ENCODE measurements at regions of chr5 and their contacts with region 1.

Region 1: DNA sequence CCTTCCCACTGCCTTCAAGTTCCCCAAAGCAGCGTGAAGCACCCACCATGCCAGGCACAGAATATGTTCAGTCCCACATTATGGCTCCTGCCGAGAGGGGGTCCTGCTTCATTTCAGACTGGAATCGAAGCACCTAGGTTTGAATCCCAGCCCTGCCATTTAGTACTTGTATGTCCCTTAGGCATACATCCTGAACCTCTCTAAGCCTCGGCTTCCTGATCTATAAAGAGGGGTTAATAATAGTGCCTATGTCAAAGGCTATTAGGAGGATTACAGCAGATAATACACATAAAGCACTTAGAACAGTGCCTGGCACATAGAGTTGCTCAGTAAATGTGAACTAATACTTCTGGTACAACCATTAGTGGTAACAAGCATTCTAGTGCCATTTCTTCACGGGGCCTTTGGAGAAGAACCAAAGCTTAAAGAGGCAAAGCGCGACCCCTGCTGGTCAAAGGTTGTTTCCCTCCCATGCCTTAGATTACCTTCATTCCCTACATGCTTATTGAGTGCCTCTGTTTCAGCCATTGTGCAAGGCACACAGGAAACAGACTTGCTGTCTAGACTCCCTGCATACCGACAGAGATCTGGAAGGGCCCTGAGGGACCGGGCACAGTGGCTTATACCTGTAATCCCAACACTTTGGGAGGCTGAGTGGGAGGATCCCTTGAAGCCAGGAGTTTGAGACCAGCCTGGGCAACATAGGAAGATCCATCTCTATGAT is 98.2 kb downstream of the PPARGC1B start:
- DNase-seq: peak; percentile 77
- ATAC-seq: peak; percentile 92
- H3K4me3 ChIP-seq: no peak overlapping the region
- H3K27ac ChIP-seq: no peak overlapping the region
- H3K4me1 ChIP-seq: peaks cover 0 to 2% of the 10 kb centered on the region in 2 experiments; a peak in 1 of 4 replicates
- H3K27me3 ChIP-seq: no peaks in the 10 kb centered on the region
- CTCF ChIP-seq: peak; percentile 79 to 95 (median 91)
- POLR2A ChIP-seq: no peak
- RAD21 ChIP-seq: peak; percentile 97

Region 2: GRCh38 chr5:149636851-149637246 is 191.5 kb before region 1 on chr5:
- CTCF ChIA-PET with region 1: interaction called, 54 read pairs
- POLR2A ChIA-PET with region 1: no interaction called
- RAD21 ChIA-PET with region 1: interaction called in 1 of 2 experiments, 7 read pairs
- intact Hi-C with region 1: loop called (anchors 1 kb)
- DNase-seq: peak; percentile 65
- ATAC-seq: peak; percentile 88
- H3K4me3 ChIP-seq: no peak overlapping the region
- H3K27ac ChIP-seq: no peak overlapping the region
- H3K4me1 ChIP-seq: peaks cover 16 to 35% of the 10 kb centered on the region in 2 experiments
- H3K27me3 ChIP-seq: no peaks in the 10 kb centered on the region
- CTCF ChIP-seq: peak; percentile 84 to 97 (median 94)
- POLR2A ChIP-seq: no peak
- RAD21 ChIP-seq: peak; percentile 100

Region 3: DNA sequence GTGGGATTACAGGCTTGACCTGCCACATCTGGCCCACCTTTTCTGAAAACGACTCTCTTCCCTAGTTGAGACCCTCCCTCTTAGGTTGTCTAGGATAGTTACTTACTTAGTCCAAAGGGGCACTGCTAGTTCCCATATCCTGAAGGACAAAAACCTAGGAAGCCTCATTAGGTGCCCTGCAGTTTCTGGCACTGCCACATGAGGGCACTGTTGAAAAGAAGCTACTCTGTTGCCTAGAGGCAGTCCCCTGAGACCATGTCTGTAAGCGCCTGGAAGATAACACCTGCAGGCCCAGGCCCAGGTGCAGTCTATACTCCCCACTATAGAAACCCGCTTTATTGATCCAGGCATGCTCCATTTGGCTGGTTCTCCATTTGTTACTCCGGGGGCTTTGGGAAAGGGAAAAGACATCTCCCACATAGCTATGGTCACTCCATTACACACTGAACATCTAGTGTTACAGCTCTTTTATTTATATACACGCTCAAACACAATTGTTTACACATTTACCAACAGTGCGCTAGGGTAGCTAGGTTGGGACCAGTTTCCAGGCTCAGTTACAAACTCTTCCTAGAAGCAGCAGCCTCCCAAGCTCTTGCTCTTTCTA is 171.6 kb before region 1 on chr5:
- CTCF ChIA-PET with region 1: interaction called, 11 read pairs
- POLR2A ChIA-PET with region 1: no interaction called
- RAD21 ChIA-PET with region 1: no interaction called
- intact Hi-C with region 1: no loop called
- DNase-seq: no peak
- ATAC-seq: peak; percentile 73
- H3K4me3 ChIP-seq: no peak overlapping the region
- H3K27ac ChIP-seq: no peak overlapping the region
- H3K4me1 ChIP-seq: no peaks in the 10 kb centered on the region
- H3K27me3 ChIP-seq: no peaks in the 10 kb centered on the region
- CTCF ChIP-seq: peak; percentile 60 to 93 (median 87)
- POLR2A ChIP-seq: no peak
- RAD21 ChIP-seq: peak; percentile 61